ENCODE measurements at regions of chr6 and their contacts with region 1.

Region 1: DNA sequence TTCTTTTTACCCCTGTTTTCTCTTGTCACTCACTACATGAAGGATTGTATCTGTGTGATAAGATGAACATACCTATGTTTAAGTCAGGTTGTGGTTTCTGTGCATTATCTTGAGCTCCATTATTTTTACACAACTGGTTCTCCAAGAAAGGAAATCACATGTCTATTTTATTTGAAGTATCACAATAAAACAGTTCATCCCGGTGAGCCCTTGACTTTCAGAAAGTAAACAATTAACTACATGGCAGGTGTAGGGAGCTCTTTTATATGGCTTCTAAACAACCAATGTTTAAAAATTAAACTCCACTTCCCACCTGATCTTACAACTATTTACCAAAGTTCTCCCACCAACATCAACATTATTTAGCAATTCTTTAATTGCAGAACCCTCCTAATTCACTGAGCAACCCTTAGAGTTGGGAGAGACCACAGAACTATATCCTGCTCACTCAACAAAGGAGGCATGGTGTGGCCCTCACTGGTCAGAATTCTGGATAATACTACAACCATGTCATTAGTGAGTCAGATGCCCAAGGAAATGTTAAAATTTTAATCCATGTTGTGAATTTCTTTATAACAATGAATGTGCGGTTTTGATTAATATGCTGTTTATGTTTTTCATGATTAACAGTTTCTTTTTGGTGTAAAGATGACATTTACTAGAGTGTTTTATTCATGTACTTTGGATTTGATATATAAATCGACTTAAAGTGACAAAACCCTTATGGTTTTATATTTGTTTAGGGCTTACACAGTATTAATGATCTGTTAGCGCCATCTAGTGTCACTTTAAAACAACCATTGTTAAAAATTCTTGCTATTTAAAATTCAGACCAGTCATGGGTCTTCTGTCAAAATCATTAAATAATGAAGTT is 50.0 kb upstream of the SCGN start:
- DNase-seq: peak; percentile 40
- CTCF ChIP-seq: peak; percentile 50

Region 2: GRCh38 chr6:25612666-25613065 is 10.6 kb after region 1 on chr6:
- CTCF ChIA-PET with region 1: interaction called, 12 read pairs
- POLR2A ChIA-PET with region 1: no interaction called
- DNase-seq: no peak
- CTCF ChIP-seq: no peak

Region 3: GRCh38 chr6:25629198-25629576 is 27.1 kb after region 1 on chr6:
- CTCF ChIA-PET with region 1: no interaction called
- POLR2A ChIA-PET with region 1: no interaction called
- DNase-seq: no peak
- CTCF ChIP-seq: no peak